ENCODE measurements at regions of chr20 and their contacts with region 1.

Region 1: GRCh38 chr20:33450867-33451266 is 7.3 kb upstream of the SNTA1 start:
- DNase-seq: peak; percentile 40
- ATAC-seq: peak; percentile 56
- H3K4me3 ChIP-seq: no peak overlapping the region
- H3K27ac ChIP-seq: no peak overlapping the region
- H3K4me1 ChIP-seq: no peaks in the 10 kb centered on the region
- H3K27me3 ChIP-seq: no peaks in the 10 kb centered on the region
- CTCF ChIP-seq: no peak
- POLR2A ChIP-seq: no peak
- RAD21 ChIP-seq: no peak

Region 2: DNA sequence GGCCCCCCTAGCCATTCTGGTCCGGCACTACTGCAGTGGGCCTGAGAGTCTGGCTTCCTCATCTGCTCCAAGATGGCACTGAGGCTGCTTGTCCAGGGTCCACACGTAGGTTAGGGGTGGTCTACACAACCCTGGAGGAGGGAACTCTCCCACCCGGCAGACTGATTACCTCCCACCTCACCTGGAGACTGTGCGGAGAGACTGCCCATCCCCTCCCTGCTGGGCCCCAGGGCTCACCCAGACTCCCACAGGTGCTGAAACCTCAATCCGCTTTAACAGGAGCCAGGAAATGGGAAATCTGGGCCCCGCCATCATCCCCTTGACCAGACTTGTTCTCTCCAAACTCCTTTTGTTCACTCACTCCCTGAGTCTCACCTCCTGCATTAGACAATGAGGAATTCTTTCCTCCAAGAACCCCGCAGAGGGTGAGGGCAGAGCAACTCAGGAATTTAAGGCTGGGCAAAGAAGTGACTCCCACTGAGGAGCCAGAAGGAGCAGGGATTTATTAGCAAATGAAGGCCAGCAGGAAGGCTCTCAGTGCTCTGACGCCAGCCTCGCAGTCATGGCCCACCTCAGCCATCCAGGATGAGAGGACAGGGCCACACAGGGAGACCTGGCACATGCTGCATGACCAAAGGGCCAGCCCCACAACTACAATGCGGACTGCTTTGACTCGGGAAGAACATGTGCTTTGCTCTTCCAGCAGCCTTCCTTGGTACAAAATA is 102.6 kb before region 1 on chr20:
- CTCF ChIA-PET with region 1: no interaction called
- POLR2A ChIA-PET with region 1: no interaction called
- dilution Hi-C with region 1: no loop called
- in situ Hi-C with region 1: no loop called
- intact Hi-C with region 1: no loop called
- DNase-seq: no peak
- ATAC-seq: no peak
- H3K4me3 ChIP-seq: no peak overlapping the region
- H3K27ac ChIP-seq: no peak overlapping the region
- H3K4me1 ChIP-seq: no peaks in the 10 kb centered on the region; the same call in 1 of the 2 replicates
- H3K27me3 ChIP-seq: no peaks in the 10 kb centered on the region; the same call in 1 of the 2 replicates
- CTCF ChIP-seq: no peak
- POLR2A ChIP-seq: no peak
- RAD21 ChIP-seq: no peak

Region 3: GRCh38 chr20:33515569-33516216 is 64.8 kb after region 1 on chr20:
- CTCF ChIA-PET with region 1: no interaction called
- POLR2A ChIA-PET with region 1: no interaction called
- dilution Hi-C with region 1: no loop called
- in situ Hi-C with region 1: no loop called
- intact Hi-C with region 1: loop called (anchors 10 kb)
- DNase-seq: no peak
- ATAC-seq: no peak
- H3K4me3 ChIP-seq: no peak overlapping the region
- H3K27ac ChIP-seq: no peak overlapping the region
- H3K4me1 ChIP-seq: peaks cover 2% of the 10 kb centered on the region; the same call in 1 of the 2 replicates
- H3K27me3 ChIP-seq: no peaks in the 10 kb centered on the region
- CTCF ChIP-seq: peak; percentile 32; the same call in 1 of the 2 replicates
- POLR2A ChIP-seq: no peak
- RAD21 ChIP-seq: 0 out of 2 replicates have a peak, but pooled peaks have one; percentile 13

Region 4: GRCh38 chr20:34232494-34233087 is 781.7 kb after region 1 on chr20:
- CTCF ChIA-PET with region 1: no interaction called
- POLR2A ChIA-PET with region 1: no interaction called
- dilution Hi-C with region 1: no loop called
- in situ Hi-C with region 1: no loop called
- intact Hi-C with region 1: no loop called
- DNase-seq: no peak
- ATAC-seq: no peak
- H3K4me3 ChIP-seq: no peak overlapping the region
- H3K27ac ChIP-seq: no peak overlapping the region
- H3K4me1 ChIP-seq: no peaks in the 10 kb centered on the region
- H3K27me3 ChIP-seq: peaks cover 9% of the 10 kb centered on the region
- CTCF ChIP-seq: no peak
- POLR2A ChIP-seq: no peak
- RAD21 ChIP-seq: no peak

Measured in IMR-90 (cell line).